ENCODE measurements at regions of chr17 and their contacts with region 1.

Region 1: GRCh38 chr17:39621523-39622379 is 5.0 kb upstream of the PPP1R1B start:
- DNase-seq: peak; percentile 86
- H3K4me3 Mint-ChIP-seq: peak overlapping the region; percentile 68
- H3K27ac Mint-ChIP-seq: peak overlapping the region; percentile 62
- H3K4me1 Mint-ChIP-seq: peaks cover 27% of the 10 kb centered on the region
- H3K27me3 Mint-ChIP-seq: peaks cover 62% of the 10 kb centered on the region

Region 2: GRCh38 chr17:39199820-39200069 is 422.0 kb before region 1 on chr17:
- intact Hi-C with region 1: loop called (anchors 10 kb)
- DNase-seq: peak; percentile 84
- H3K4me3 Mint-ChIP-seq: peak overlapping the region; percentile 93
- H3K27ac Mint-ChIP-seq: peak overlapping the region; percentile 98
- H3K4me1 Mint-ChIP-seq: peaks cover 47% of the 10 kb centered on the region
- H3K27me3 Mint-ChIP-seq: no peaks in the 10 kb centered on the region

Region 3: GRCh38 chr17:39579318-39580081 is 42.3 kb before region 1 on chr17:
- intact Hi-C with region 1: no loop called
- DNase-seq: no peak
- H3K4me3 Mint-ChIP-seq: no peak overlapping the region
- H3K27ac Mint-ChIP-seq: no peak overlapping the region
- H3K4me1 Mint-ChIP-seq: no peaks in the 10 kb centered on the region
- H3K27me3 Mint-ChIP-seq: peaks cover 4% of the 10 kb centered on the region

Region 4: GRCh38 chr17:39636927-39637736 is 15.4 kb after region 1 on chr17 and contains the start of gene STARD3:
- intact Hi-C with region 1: loop called (anchors 1 kb)
- DNase-seq: peak; percentile 88
- H3K4me3 Mint-ChIP-seq: peak within 1 kb of the TSS; percentile 94
- H3K27ac Mint-ChIP-seq: peak within 1 kb of the TSS; percentile 85
- H3K4me1 Mint-ChIP-seq: peaks cover 34% of the 10 kb centered on the region
- H3K27me3 Mint-ChIP-seq: peaks cover 2% of the 10 kb centered on the region
- total RNA-seq, gene STARD3: 54.7 and 65.3 TPM in 2 replicates

Region 5: GRCh38 chr17:39668199-39668966 is 46.6 kb after region 1 on chr17 and contains the start of gene PNMT:
- intact Hi-C with region 1: loop called (anchors 1 kb)
- DNase-seq: peak; percentile 46
- H3K4me3 Mint-ChIP-seq: peak within 1 kb of the TSS; percentile 37
- H3K27ac Mint-ChIP-seq: peak within 1 kb of the TSS; percentile 29
- H3K4me1 Mint-ChIP-seq: peaks cover 7% of the 10 kb centered on the region
- H3K27me3 Mint-ChIP-seq: peaks cover 29% of the 10 kb centered on the region
- total RNA-seq, gene PNMT: not detected in 2 replicates

Region 6: DNA sequence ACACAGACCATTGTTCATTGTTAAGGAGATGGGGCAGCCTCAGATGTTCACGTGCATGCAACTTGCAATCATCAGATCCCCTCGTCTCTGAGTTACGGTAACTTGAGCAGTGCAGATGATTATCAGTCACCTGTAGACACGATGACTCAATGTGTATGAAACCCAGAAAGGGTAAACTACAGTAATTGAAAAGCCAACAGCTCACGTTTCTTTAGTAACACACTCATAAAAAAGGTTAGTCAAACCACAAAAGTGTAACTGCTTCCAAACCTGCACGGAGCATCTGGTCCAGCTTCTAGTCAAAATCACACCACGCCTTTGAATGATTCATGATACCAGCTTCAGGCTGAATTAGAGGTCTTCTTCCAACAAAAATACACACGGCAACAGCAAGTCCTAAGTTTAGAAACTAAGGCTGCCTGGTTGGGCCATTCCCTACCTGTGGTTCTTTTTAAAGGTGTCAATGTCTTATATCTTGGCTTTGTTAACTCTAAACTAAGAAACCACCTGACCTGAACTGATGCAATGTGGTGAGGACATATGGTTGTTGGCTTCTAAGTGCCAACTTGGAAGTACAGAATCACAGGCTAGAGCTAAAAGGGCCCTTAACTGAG is 148.3 kb after region 1 on chr17:
- intact Hi-C with region 1: no loop called
- DNase-seq: peak; percentile 63
- H3K4me3 Mint-ChIP-seq: peak overlapping the region; percentile 38
- H3K27ac Mint-ChIP-seq: peak overlapping the region; percentile 56
- H3K4me1 Mint-ChIP-seq: peaks cover 93% of the 10 kb centered on the region
- H3K27me3 Mint-ChIP-seq: no peaks in the 10 kb centered on the region

Region 7: DNA sequence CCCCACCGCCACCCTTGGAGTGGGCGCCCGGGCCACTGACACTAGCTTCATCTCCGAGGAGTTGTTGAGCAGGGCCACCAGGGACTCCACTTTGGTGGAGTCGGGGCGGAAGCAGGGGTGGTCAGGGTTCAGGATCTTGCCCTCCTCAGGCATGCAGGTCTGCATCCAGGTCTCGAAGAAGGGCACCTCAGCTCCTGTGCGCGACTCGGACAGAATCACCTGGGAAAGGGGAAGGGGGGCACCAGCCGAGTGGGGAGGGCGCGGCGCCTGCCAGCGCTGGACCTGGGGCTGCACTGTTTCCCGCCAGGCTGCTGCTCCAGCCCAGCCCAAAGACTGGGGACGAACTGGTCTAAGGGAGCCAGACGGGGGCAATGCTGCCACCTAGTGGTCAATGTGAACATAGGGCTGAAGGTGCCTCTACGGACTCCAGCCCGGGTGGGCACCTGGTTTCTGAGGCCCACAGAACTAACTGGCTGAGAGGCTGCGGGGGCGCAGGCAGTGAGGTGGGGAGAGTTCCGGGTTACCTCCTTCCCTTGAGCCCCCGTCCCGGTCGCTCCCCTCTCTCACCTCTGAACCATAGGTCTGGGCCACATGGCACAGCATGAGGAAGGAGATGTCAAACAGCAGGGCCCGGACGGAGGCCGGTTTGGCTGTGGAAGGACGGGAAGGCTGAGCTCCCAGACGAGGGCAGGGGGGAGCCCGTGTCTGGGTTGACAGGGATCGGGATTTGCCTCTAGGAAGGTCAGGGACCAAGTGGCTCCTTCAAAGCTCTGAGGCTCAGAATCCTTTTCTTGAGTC is 405.3 kb after region 1 on chr17:
- intact Hi-C with region 1: loop called (anchors 1 kb)
- DNase-seq: peak; percentile 57
- H3K4me3 Mint-ChIP-seq: no peak overlapping the region
- H3K27ac Mint-ChIP-seq: no peak overlapping the region
- H3K4me1 Mint-ChIP-seq: peaks cover 18% of the 10 kb centered on the region
- H3K27me3 Mint-ChIP-seq: no peaks in the 10 kb centered on the region

Measured in activated T-helper 1 cell treated with anti-CD3 and anti-CD28 coated beads, Interleukin-12 subunit alpha, Interleukin-12 subunit beta, Interleukin-2, Interleukin-4 antibody, amounts not matched to agents 30 ng/mL and 10 ng/mL and 1 ng/mL, durations not matched to agents 14 hours and 24 hours and 36 hours (primary cell).